K562 (cell line): ENCODE measurements at regions of chr15 and their contacts with region 1.

Region 1: DNA sequence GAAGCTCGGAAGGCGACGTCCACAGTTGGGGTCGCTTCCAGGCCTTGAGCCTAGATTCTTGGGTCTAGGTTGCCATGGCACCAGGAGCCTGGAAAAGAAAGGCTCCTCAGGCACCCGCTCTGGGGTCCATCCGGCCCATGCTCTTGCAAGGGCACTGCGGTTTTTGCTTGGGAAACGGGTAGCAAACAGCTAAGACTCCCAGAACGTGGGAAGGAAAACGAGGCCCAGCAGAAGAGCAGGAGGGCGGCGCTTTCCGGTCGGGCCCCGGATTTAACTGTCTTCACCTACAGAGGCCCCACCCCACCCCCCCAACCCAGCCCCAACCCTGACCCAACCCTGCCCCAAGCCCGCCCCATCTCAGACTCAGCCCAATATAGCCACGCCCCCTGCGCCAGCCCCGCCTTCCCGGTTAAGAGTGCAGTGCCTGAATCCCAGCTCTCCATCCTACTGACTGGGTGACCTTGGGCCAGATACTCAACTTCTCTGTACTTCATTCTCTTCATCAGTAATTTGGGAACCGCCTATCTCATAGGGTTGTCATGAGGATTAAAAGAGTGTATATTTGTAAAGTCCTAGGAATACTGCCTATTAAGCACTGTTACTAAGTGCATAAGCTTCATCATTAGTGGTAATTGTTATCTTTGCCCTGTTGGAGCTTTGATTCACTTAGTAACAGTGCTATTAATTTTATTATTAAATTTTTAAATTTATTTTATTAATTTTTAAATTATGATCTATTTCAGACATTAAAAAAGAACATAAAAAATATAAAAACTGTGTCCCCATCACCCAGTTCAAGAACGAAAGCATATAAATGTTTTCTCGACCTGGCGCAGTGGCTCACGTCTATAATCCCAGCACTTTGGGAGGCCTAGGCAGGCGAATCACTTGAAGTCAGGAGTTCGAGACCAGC is 28.4 kb upstream of the SMAD6 start:
- DNase-seq: peak; percentile 88 to 94 (median 92)
- ATAC-seq: peak; percentile 91
- H3K4me3 ChIP-seq: no peak overlapping the region
- H3K27ac ChIP-seq: peak overlapping the region; percentile 90
- H3K4me1 ChIP-seq: peaks cover 32 to 40% of the 10 kb centered on the region in 2 experiments
- H3K27me3 ChIP-seq: no peaks in the 10 kb centered on the region
- CTCF ChIP-seq: no peak
- EP300 ChIP-seq: no peak
- POLR2A ChIP-seq: peak; percentile 38; the same call in 1 of the 2 replicates
- RAD21 ChIP-seq: no peak

Region 2: GRCh38 chr15:66629817-66630576 is 43.7 kb before region 1 on chr15:
- CTCF ChIA-PET with region 1: no interaction called
- POLR2A ChIA-PET with region 1: no interaction called
- in situ Hi-C with region 1: no loop called
- intact Hi-C with region 1: loop called (anchors 5 kb)
- DNase-seq: no peak
- ATAC-seq: no peak
- H3K4me3 ChIP-seq: no peak overlapping the region
- H3K27ac ChIP-seq: peak overlapping the region; percentile 73
- H3K4me1 ChIP-seq: peaks cover 61 to 69% of the 10 kb centered on the region in 2 experiments
- H3K27me3 ChIP-seq: no peaks in the 10 kb centered on the region
- CTCF ChIP-seq: no peak
- EP300 ChIP-seq: no peak
- POLR2A ChIP-seq: no peak
- RAD21 ChIP-seq: no peak

Region 3: GRCh38 chr15:66661432-66662096 is 12.1 kb before region 1 on chr15:
- CTCF ChIA-PET with region 1: no interaction called
- POLR2A ChIA-PET with region 1: interaction called, 12 read pairs
- in situ Hi-C with region 1: no loop called
- intact Hi-C with region 1: no loop called
- DNase-seq: peak; percentile 79 to 94 (median 88)
- ATAC-seq: peak; percentile 97
- H3K4me3 ChIP-seq: peak overlapping the region; percentile 23
- H3K27ac ChIP-seq: peak overlapping the region; percentile 99
- H3K4me1 ChIP-seq: peaks cover 33 to 40% of the 10 kb centered on the region in 2 experiments
- H3K27me3 ChIP-seq: no peaks in the 10 kb centered on the region
- CTCF ChIP-seq: 0 out of 6 replicates have a peak, but pooled peaks of 1 of the 3 experiments have one; percentile 4
- EP300 ChIP-seq: peak; percentile 89
- POLR2A ChIP-seq: peak; percentile 83
- RAD21 ChIP-seq: peak; percentile 20; a peak in 3 of 4 replicates